Activated CD4-positive, alpha-beta T cell treated with anti-CD3 and anti-CD28 coated beads, Interleukin-2, amount 10 ng/mL, durations not matched to agents 7 days and 5 days (primary cell): ENCODE measurements at regions of chr7 and their contacts with region 1.

Region 1: DNA sequence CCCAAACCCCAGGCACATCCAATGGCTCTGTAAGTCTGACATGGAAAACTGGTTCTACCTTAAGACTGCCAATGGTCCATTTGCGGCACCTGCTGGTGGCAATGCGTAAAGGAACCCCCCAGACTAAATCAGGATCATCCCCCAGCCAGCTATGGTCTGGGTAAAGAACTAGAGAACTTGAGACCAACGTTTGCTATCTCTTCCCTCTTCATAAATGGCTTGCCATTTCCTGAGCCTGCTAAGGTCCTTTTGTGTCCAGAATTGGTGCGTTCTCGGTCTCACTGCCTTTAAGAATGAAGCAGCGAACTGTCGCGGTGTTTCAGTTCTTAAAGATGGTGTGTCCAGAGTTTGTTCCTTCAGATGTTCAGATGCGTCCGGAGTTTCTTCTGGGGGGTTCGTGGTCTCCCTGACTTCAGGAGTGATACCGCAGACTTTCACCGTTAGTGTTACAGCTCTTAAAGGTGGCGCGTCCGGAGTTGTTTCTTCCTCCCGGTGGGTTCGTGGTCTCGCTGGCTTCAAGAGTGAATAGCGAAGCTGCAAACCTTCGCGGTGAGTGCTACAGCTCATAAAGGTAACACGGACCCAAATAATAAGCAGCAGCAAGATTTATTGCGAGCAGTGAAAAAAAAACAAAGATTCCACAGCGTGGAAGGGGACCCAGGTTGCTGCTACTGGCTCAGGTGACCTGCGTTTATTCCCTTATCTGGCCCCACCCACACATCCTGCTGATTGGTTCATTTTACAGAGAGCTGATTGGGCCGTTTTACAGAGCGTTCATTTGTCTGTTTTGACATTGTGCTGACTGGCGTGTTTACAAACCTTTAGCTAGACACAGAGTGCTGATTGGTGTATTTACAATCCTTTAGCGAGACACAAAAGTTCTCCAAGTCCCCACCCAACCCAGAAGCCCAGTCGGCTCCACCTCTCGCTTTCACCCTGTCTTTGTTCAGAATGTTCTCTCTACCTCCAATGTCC is 95.4 kb downstream of the ELMO1 start:
- DNase-seq: peak; percentile 80
- H3K4me3 Mint-ChIP-seq: peak overlapping the region; percentile 86
- H3K27ac Mint-ChIP-seq: peak overlapping the region; percentile 91
- H3K4me1 Mint-ChIP-seq: peaks cover 77% of the 10 kb centered on the region
- H3K27me3 Mint-ChIP-seq: no peaks in the 10 kb centered on the region

Region 2: GRCh38 chr7:37342688-37343471 is 10.4 kb before region 1 on chr7:
- CTCF ChIA-PET with region 1: interaction called, 14 read pairs
- POLR2A ChIA-PET with region 1: no interaction called
- DNase-seq: peak; percentile 82
- H3K4me3 Mint-ChIP-seq: peak overlapping the region; percentile 90
- H3K27ac Mint-ChIP-seq: peak overlapping the region; percentile 96
- H3K4me1 Mint-ChIP-seq: peaks cover 69% of the 10 kb centered on the region
- H3K27me3 Mint-ChIP-seq: no peaks in the 10 kb centered on the region